Caco-2 (cell line): ENCODE measurements at regions of chr9 and their contacts with region 1.

Region 1: DNA sequence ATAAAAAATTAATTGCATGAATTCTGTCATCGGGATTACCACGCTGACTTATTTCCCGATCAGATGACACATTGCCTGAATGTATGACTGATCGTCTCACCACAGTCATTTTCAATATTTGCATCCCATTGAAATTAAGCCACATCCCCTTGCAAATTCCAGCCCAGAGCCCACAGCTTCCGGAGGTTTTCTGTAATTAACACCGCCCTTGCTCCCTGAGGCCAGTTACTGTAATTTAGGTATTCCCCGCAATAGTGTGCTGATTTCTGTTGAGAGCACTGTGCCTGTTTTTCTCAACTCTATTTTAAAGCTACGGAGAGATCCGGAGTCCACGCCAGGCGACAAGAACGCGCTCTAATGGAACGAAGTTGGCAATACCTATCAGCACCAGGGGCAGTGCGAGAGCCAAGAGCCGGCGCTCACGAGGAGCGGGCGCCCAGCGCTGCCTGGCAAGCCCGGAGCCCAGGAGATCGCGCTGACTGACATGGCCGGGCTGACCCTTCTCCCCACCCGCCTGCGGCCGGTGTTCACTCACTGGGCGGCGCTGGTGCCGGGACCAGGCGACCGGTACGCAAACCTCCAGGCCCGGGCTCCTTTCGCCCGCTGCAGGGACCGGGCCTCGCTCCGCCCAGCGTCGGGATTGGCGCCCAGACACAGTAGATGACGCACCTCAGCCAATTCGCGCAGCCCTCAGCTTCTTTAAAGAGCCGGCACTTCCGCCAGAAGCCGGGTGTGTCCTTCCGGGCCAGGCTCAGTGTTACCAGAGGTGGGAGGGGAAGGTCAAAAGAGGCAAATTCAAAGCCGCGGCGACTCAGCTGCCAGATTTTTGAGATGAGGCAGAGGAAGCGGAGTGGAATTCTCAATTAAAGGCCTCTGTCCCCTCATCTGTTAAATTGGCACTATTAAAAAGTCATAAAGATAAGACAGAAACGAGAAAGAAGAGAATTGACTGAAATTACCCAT is at the start of gene PLGRKT:
- DNase-seq: peak; percentile 90 to 91
- H3K4me3 ChIP-seq: peak within 1 kb of the TSS; percentile 49
- H3K4me3 Mint-ChIP-seq: peak within 1 kb of the TSS; percentile 80
- H3K27ac Mint-ChIP-seq: peak within 1 kb of the TSS; percentile 80
- H3K4me1 ChIP-seq: peaks cover 8% of the 10 kb centered on the region; the same call in 1 of the 2 replicates
- H3K4me1 Mint-ChIP-seq: no peaks in the 10 kb centered on the region
- H3K27me3 ChIP-seq: no peaks in the 10 kb centered on the region
- H3K27me3 Mint-ChIP-seq: no peaks in the 10 kb centered on the region
- CTCF ChIP-seq: peak in 1 of 2 experiments; percentile 26
- total RNA-seq, gene PLGRKT: 5.0 and 7.0 TPM in 2 replicates

Region 2: DNA sequence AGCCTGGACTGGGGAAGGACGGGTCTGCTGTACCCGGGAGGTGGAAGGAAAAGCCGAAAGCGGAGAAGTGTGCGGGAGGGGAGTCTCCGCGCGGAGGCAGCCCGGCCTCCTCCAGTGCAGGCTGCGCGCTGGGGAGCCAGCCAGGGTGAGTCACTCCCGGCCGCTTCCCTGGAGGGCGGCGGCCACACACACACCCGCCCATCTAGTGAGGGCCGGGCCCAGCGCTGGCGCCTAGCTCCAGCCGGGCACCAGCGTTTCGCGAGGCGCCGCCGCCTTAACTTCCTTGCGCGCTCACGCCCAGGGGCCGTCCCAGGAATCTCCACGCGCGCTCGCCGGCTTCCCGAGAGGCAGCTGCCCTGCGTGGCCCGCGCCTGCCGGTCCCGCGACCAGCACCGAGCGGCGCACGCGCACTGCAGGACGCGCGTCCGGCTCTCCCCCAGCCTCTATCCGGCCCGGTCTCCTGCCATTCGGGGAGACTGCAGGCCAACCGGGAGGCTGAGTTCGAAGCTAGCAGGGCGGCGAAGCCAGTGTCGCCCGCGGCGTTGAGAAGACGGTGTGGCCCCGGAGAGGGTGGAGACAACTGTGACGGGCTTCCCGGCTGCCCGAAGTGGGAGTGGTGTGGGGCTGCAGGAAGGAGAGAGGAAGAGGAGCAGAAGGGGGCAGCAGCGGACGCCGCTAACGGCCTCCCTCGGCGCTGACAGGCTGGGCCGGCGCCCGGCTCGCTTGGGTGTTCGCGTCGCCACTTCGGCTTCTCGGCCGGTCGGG is 452.7 kb before region 1 on chr9 and contains the start of gene JAK2:
- CTCF ChIA-PET with region 1: no interaction called
- POLR2A ChIA-PET with region 1: interaction called, 3 read pairs
- intact Hi-C with region 1: loop called (anchors 5 kb)
- DNase-seq: peak; percentile 89 to 90
- H3K4me3 ChIP-seq: peak within 1 kb of the TSS; percentile 63
- H3K4me3 Mint-ChIP-seq: peak within 1 kb of the TSS; percentile 76
- H3K27ac Mint-ChIP-seq: peak within 1 kb of the TSS; percentile 87
- H3K4me1 ChIP-seq: peaks cover 3% of the 10 kb centered on the region; the same call in 1 of the 2 replicates
- H3K4me1 Mint-ChIP-seq: peaks cover 15% of the 10 kb centered on the region
- H3K27me3 ChIP-seq: no peaks in the 10 kb centered on the region
- H3K27me3 Mint-ChIP-seq: peaks cover 5% of the 10 kb centered on the region
- CTCF ChIP-seq: peak; percentile 18 to 28
- total RNA-seq, gene JAK2: 0.86 and 1.4 TPM in 2 replicates

Region 3: DNA sequence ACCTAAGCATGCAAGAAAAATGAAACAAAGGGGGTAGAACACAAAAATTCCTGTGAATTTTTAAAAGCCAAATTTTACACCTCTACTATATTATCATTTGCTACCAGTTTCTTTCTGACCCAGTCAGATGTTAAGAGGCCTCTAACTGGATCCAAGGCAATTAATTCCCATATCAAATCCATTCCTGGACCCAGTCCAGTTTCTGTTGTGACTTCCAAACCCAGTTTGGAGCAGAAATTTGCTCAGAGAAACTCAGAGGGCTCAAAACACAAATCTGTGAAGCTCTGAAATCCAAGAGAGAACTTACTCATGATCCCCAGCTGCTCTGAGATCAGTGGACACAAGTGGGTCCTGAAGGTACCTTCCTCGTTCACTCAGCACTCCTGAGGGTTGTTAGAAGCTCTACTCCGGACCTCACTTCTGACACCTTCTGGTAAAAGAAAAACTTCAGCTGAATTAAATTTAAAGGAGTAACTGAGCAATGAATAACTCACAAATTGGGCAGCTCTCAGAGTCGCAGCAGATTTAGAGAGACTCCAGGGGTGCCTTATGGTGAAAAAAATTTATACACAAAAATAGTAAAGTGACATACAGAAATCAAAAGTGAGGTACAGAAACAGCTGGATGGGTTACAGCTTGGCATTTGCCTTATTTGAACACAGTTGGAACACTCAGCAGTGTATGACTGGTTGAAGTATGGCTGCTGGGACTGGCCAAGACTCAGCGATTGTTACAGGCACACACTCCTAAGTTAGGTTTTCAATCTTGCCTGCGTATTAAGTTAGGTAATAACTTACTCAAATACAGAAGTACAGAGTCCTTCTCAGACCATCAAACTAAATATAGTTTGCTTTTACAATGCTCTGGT is 173.9 kb before region 1 on chr9:
- CTCF ChIA-PET with region 1: no interaction called
- POLR2A ChIA-PET with region 1: no interaction called
- intact Hi-C with region 1: loop called (anchors 10 kb)
- DNase-seq: peak in 1 of 2 experiments; percentile 11
- H3K4me3 ChIP-seq: no peak overlapping the region
- H3K4me3 Mint-ChIP-seq: no peak overlapping the region
- H3K27ac Mint-ChIP-seq: no peak overlapping the region
- H3K4me1 ChIP-seq: peaks cover 5% of the 10 kb centered on the region; the same call in 1 of the 2 replicates
- H3K4me1 Mint-ChIP-seq: no peaks in the 10 kb centered on the region
- H3K27me3 ChIP-seq: no peaks in the 10 kb centered on the region
- H3K27me3 Mint-ChIP-seq: no peaks in the 10 kb centered on the region
- CTCF ChIP-seq: no peak

Region 4: DNA sequence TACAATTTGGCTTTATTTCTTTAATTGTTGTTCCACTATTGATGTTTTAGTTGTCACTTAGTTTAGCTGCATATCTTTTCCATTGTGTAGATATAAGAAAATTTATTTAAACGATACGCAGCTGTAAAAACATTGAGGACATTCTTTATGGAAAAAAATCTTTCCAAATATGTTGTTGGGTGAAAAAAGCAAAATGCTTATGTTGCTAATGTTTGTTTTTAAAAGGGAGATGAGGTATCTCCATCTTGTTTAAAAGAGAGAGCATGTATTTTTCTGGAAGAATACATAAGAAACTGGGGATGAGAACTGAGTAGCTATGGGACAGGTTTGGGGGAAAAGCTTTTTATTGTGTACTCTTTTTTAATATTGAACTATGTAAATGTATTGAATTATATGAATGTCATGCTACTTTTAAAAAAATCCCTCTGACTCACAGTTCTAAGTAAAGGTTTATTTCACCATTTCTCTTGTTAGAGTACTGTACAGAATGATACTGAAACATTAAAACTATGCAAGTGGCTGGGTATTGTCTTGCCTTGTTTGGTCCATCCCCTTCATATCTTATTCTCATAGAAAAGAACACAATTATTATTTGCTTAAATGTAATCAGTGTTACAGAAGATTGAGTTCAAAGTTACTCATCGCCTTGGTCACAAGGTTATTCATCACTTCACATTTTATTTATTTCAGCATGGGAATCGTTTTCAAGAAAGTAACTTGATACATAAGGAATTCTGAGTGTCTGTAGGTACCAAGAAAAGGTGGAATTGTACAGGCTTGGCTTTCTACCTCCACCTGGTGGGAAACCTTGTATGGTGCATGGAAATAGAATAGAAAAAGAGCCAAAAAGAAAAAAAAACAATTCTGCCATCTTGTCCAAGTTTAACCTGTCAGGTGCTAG is 277.2 kb after region 1 on chr9:
- CTCF ChIA-PET with region 1: no interaction called
- POLR2A ChIA-PET with region 1: no interaction called
- intact Hi-C with region 1: loop called (anchors 10 kb)
- DNase-seq: peak in 1 of 2 experiments; percentile 48
- H3K4me3 ChIP-seq: no peak overlapping the region
- H3K4me3 Mint-ChIP-seq: no peak overlapping the region
- H3K27ac Mint-ChIP-seq: no peak overlapping the region
- H3K4me1 ChIP-seq: peaks cover 20% of the 10 kb centered on the region
- H3K4me1 Mint-ChIP-seq: peaks cover 17% of the 10 kb centered on the region
- H3K27me3 ChIP-seq: no peaks in the 10 kb centered on the region
- H3K27me3 Mint-ChIP-seq: no peaks in the 10 kb centered on the region
- CTCF ChIP-seq: peak; percentile 53 to 59